SK-N-SH (cell line): ENCODE measurements at regions of chr1 and their contacts with region 1.

Region 1: GRCh38 chr1:110495926-110496600 is 22.9 kb downstream of the KCNA10 start:
- DNase-seq: peak; percentile 86
- H3K4me3 ChIP-seq: no peak overlapping the region; a peak in 1 of 4 replicates
- H3K27ac ChIP-seq: no peak overlapping the region
- H3K4me1 ChIP-seq: no peaks in the 10 kb centered on the region
- H3K27me3 ChIP-seq: no peaks in the 10 kb centered on the region; the same call in 1 of the 2 replicates
- CTCF ChIP-seq: peak; percentile 97
- EP300 ChIP-seq: no peak
- RAD21 ChIP-seq: peak; percentile 97

Region 2: GRCh38 chr1:110040548-110040947 is 455.5 kb before region 1 on chr1:
- CTCF ChIA-PET with region 1: no interaction called
- POLR2A ChIA-PET with region 1: no interaction called
- DNase-seq: no peak
- H3K4me3 ChIP-seq: no peak overlapping the region
- H3K27ac ChIP-seq: no peak overlapping the region
- H3K4me1 ChIP-seq: peaks cover 4 to 6% of the 10 kb centered on the region in 2 experiments; a peak in 2 of 4 replicates
- H3K27me3 ChIP-seq: no peaks in the 10 kb centered on the region
- CTCF ChIP-seq: no peak
- EP300 ChIP-seq: no peak
- RAD21 ChIP-seq: no peak

Region 3: DNA sequence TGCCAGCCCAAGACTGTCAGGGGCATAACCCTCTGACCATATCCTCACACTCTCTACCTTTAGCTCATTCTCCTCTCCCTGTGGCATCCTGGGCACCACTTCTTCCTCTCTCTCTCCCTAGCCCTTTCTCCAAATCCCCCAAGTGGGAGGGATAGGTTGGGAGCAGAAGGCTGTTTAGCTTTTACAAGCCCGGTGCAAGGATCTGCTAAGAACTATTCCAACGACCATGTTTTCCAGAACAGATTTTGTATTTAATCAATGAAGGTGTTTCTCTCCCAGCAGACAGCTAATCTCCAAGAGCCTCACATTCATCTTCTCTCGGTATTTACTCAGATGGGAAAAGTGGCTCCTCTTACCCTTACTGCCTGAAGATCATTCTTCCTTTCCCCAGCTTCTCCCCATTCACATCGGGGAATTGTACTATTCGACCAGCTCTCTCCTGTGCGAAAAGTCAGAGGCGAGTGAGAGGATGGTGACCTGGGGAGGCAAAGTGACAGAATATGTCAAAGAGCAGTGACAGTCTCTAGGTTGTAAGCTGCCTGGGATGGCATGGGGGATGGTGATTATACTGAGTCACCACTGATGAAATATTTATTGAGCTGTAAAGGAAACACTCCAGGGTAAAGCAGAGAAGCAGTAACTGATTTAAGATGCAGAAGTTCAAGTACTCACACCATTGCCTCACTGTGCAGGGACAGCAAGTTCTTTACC is 203.9 kb before region 1 on chr1:
- CTCF ChIA-PET with region 1: interaction called, 11 read pairs
- POLR2A ChIA-PET with region 1: no interaction called
- DNase-seq: no peak
- H3K4me3 ChIP-seq: no peak overlapping the region
- H3K27ac ChIP-seq: no peak overlapping the region
- H3K4me1 ChIP-seq: no peaks in the 10 kb centered on the region; a peak in 2 of 4 replicates
- H3K27me3 ChIP-seq: 0 out of 2 replicates have a peak, but pooled peaks cover 5% of the 10 kb centered on the region
- CTCF ChIP-seq: no peak
- EP300 ChIP-seq: no peak
- RAD21 ChIP-seq: no peak

Region 4: GRCh38 chr1:110384581-110385321 is 111.3 kb before region 1 on chr1:
- CTCF ChIA-PET with region 1: no interaction called
- POLR2A ChIA-PET with region 1: no interaction called
- DNase-seq: no peak
- H3K4me3 ChIP-seq: no peak overlapping the region
- H3K27ac ChIP-seq: no peak overlapping the region
- H3K4me1 ChIP-seq: no peaks in the 10 kb centered on the region
- H3K27me3 ChIP-seq: no peaks in the 10 kb centered on the region
- CTCF ChIP-seq: no peak
- EP300 ChIP-seq: no peak
- RAD21 ChIP-seq: no peak

Region 5: GRCh38 chr1:110407260-110408210 is 88.5 kb before region 1 on chr1 and contains the start of gene LAMTOR5:
- CTCF ChIA-PET with region 1: interaction called, 135 read pairs
- POLR2A ChIA-PET with region 1: interaction called, 3 read pairs
- DNase-seq: peak; percentile 87
- H3K4me3 ChIP-seq: peak within 1 kb of the TSS; percentile 75 to 99
- H3K27ac ChIP-seq: peak within 1 kb of the TSS; percentile 62 to 80
- H3K4me1 ChIP-seq: peaks cover 6 to 15% of the 10 kb centered on the region in 2 experiments; a peak in 3 of 4 replicates
- H3K27me3 ChIP-seq: no peaks in the 10 kb centered on the region
- CTCF ChIP-seq: no peak; the same call in 1 of the 2 replicates
- EP300 ChIP-seq: 0 out of 4 replicates have a peak, but pooled peaks of 1 of the 2 experiments have one; percentile 31
- RAD21 ChIP-seq: peak; percentile 9; the same call in 1 of the 2 replicates
- polyA plus RNA-seq, gene LAMTOR5: 442 and 636 TPM in 2 replicates

Region 6: DNA sequence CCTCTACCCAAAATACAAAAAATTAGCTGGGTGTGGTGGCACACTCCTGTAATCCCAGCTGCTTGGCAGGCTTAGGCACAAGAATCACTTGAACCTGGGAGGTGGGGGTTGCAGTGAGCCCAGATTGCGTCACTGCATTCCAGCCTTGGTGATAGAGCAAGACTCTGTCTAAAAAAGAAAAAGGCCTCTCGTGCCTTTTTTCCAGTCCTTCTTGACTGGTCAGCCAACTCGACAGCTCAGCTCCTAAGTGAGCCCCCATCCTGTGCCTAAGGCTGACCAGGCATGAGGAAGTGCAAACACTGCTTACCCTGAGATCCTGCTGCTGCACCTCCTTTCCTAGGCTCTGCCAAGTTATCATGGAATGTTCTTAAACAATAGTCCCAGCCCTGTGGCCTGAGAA is 55.2 kb before region 1 on chr1:
- CTCF ChIA-PET with region 1: interaction called, 15 read pairs
- POLR2A ChIA-PET with region 1: no interaction called
- DNase-seq: no peak
- H3K4me3 ChIP-seq: no peak overlapping the region
- H3K27ac ChIP-seq: no peak overlapping the region
- H3K4me1 ChIP-seq: no peaks in the 10 kb centered on the region
- H3K27me3 ChIP-seq: peaks cover 17% of the 10 kb centered on the region; the same call in 1 of the 2 replicates
- CTCF ChIP-seq: no peak
- EP300 ChIP-seq: no peak
- RAD21 ChIP-seq: no peak

Region 7: DNA sequence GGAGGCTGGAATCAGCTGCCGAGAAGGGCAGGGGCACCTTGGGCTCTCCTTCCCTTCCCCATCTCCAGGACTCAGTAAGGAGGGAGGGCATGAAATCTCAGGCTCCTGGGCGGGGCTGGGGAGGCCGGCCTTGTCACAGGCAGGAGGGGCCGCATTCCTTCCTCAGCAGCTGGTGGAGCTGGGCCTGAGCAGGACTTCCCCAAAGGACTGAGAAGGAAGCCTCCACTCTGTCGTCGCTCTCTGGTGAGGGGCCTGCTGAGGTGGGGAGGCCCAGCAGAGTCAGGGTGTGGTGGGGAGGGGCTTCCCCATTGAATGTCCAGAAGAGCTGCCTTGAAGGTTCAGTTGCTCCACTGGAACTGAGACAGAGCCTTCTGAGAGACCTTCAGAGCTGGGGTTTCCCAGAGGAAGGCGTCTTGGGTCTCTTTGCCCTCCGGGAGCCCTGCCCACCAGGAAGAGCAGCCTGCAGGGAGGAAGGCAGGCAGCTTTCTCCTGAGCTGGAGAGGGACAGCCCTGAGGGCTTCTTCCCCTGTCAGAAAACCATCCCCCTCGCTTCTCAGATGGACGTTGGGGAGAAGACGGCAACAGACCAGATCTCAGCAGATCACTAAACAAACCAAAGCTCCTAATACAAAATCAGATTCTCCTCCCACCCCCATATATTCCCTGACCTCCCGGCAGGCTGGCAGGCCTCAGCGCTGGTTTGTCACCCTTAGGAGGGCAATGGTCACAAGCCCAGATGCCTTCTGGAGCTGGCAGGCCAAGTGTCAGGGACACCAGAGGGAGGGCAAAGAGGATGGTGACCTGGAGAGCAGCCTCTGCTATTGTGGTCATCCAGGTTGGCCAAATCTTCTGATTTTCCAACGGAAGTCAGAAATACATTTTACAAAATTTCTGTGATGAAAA is 12.2 kb after region 1 on chr1:
- CTCF ChIA-PET with region 1: interaction called, 69 read pairs
- POLR2A ChIA-PET with region 1: interaction called, 3 read pairs
- DNase-seq: no peak
- H3K4me3 ChIP-seq: no peak overlapping the region
- H3K27ac ChIP-seq: no peak overlapping the region
- H3K4me1 ChIP-seq: peaks cover 0 to 4% of the 10 kb centered on the region in 2 experiments; a peak in 1 of 4 replicates
- H3K27me3 ChIP-seq: no peaks in the 10 kb centered on the region; the same call in 1 of the 2 replicates
- CTCF ChIP-seq: no peak
- EP300 ChIP-seq: no peak
- RAD21 ChIP-seq: no peak

Region 8: GRCh38 chr1:110612065-110612751 is 116.1 kb after region 1 on chr1:
- CTCF ChIA-PET with region 1: interaction called, 12 read pairs
- POLR2A ChIA-PET with region 1: no interaction called
- DNase-seq: no peak
- H3K4me3 ChIP-seq: no peak overlapping the region
- H3K27ac ChIP-seq: no peak overlapping the region
- H3K4me1 ChIP-seq: no peaks in the 10 kb centered on the region; a peak in 1 of 4 replicates
- H3K27me3 ChIP-seq: peaks cover 37% of the 10 kb centered on the region
- CTCF ChIP-seq: no peak
- EP300 ChIP-seq: no peak
- RAD21 ChIP-seq: no peak

Region 9: DNA sequence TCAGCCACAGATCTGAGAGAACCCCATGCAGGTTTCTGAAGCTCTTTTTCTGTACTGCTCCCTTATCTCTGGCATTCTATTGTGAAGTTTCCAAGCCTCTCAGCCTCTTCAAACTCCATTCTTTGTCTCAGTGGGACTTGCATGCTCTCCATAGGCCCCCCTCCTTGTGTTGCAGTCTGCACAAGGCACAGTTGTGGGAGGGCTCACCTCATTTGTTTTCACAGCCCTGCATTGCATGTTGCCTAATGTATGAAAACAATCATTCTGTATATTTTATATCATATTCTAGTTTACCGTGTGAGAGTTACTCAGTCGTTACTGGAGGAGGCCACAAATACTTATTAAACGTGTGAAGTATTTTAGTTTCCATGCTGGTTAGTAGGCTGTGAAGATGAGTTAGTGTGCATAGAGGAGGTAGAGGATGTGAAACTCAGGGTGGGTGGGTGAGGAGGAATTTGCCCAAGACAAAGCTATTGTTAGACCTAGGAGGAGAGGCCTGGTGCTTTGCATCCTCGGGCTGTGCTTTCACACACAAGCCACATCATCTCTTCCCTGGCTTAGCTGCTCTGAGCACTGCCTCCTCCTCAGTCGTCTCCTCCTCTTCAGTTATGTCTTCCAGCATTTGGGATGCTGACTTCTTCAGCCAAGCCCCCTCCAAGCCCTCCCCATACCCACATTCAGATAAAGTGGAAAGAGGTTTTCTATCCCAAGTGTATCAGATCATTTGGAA is 723.7 kb after region 1 on chr1:
- CTCF ChIA-PET with region 1: no interaction called
- POLR2A ChIA-PET with region 1: no interaction called
- DNase-seq: no peak
- H3K4me3 ChIP-seq: no peak overlapping the region
- H3K27ac ChIP-seq: no peak overlapping the region
- H3K4me1 ChIP-seq: peaks cover 0 to 5% of the 10 kb centered on the region in 2 experiments; a peak in 2 of 4 replicates
- H3K27me3 ChIP-seq: no peaks in the 10 kb centered on the region
- CTCF ChIP-seq: no peak
- EP300 ChIP-seq: no peak
- RAD21 ChIP-seq: no peak